ENCODE measurements at regions of chr20 and their contacts with region 1.

Region 1: GRCh38 chr20:3888622-3889488 is at the start of gene PANK2:
- DNase-seq: peak; percentile 100
- H3K4me3 ChIP-seq: peak within 1 kb of the TSS; percentile 93
- H3K4me3 Mint-ChIP-seq: peak within 1 kb of the TSS; percentile 100
- H3K27ac Mint-ChIP-seq: peak within 1 kb of the TSS; percentile 98
- H3K4me1 ChIP-seq: peaks cover 21% of the 10 kb centered on the region
- H3K4me1 Mint-ChIP-seq: peaks cover 40% of the 10 kb centered on the region
- H3K27me3 ChIP-seq: no peaks in the 10 kb centered on the region
- H3K27me3 Mint-ChIP-seq: no peaks in the 10 kb centered on the region
- CTCF ChIP-seq: peak; percentile 48 to 52
- total RNA-seq, gene PANK2: 55.8 and 58.3 TPM in 2 replicates

Region 2: DNA sequence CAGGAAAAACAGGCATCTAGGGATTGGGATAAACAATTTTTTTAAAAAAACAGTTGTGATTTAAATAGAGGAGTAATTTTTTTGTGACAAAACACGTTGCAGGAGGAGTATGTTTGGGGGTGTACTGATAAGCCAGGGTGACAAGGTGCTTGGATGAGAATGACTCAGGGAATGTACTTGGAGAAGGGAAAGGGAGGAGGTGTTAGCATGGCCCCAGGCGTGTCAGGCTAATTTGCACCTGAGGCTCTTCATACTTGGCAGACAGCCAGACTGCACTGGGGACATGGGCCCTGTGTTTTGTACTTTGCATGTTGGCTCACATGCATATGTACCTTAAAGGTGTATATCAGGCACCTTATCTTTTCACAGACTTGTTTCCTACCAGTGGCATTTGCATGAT is 23.1 kb after region 1 on chr20:
- CTCF ChIA-PET with region 1: no interaction called
- POLR2A ChIA-PET with region 1: no interaction called
- intact Hi-C with region 1: no loop called
- DNase-seq: no peak
- H3K4me3 ChIP-seq: no peak overlapping the region
- H3K4me3 Mint-ChIP-seq: no peak overlapping the region
- H3K27ac Mint-ChIP-seq: no peak overlapping the region
- H3K4me1 ChIP-seq: no peaks in the 10 kb centered on the region
- H3K4me1 Mint-ChIP-seq: no peaks in the 10 kb centered on the region
- H3K27me3 ChIP-seq: no peaks in the 10 kb centered on the region
- H3K27me3 Mint-ChIP-seq: no peaks in the 10 kb centered on the region
- CTCF ChIP-seq: no peak

Region 3: GRCh38 chr20:3970016-3970415 is 81.2 kb after region 1 on chr20:
- CTCF ChIA-PET with region 1: no interaction called
- POLR2A ChIA-PET with region 1: no interaction called
- intact Hi-C with region 1: loop called (anchors 2 kb)
- DNase-seq: peak; percentile 55 to 66
- H3K4me3 ChIP-seq: no peak overlapping the region
- H3K4me3 Mint-ChIP-seq: no peak overlapping the region
- H3K27ac Mint-ChIP-seq: no peak overlapping the region
- H3K4me1 ChIP-seq: peaks cover 14% of the 10 kb centered on the region
- H3K4me1 Mint-ChIP-seq: peaks cover 18% of the 10 kb centered on the region
- H3K27me3 ChIP-seq: no peaks in the 10 kb centered on the region
- H3K27me3 Mint-ChIP-seq: no peaks in the 10 kb centered on the region
- CTCF ChIP-seq: peak in 1 of 2 experiments; percentile 49

Region 4: GRCh38 chr20:4014031-4014474 is 125.2 kb after region 1 on chr20:
- CTCF ChIA-PET with region 1: no interaction called
- POLR2A ChIA-PET with region 1: no interaction called
- intact Hi-C with region 1: loop called (anchors 2 kb)
- DNase-seq: peak; percentile 64 to 67
- H3K4me3 ChIP-seq: peak overlapping the region; percentile 80
- H3K4me3 Mint-ChIP-seq: peak overlapping the region; percentile 65
- H3K27ac Mint-ChIP-seq: no peak overlapping the region
- H3K4me1 ChIP-seq: peaks cover 37% of the 10 kb centered on the region
- H3K4me1 Mint-ChIP-seq: peaks cover 38% of the 10 kb centered on the region
- H3K27me3 ChIP-seq: no peaks in the 10 kb centered on the region
- H3K27me3 Mint-ChIP-seq: no peaks in the 10 kb centered on the region
- CTCF ChIP-seq: peak; percentile 50 to 79

Region 5: GRCh38 chr20:4076671-4077070 is 187.8 kb after region 1 on chr20:
- CTCF ChIA-PET with region 1: interaction called, 4 read pairs
- POLR2A ChIA-PET with region 1: no interaction called
- intact Hi-C with region 1: loop called (anchors 5 kb)
- DNase-seq: no peak
- H3K4me3 ChIP-seq: no peak overlapping the region
- H3K4me3 Mint-ChIP-seq: no peak overlapping the region
- H3K27ac Mint-ChIP-seq: no peak overlapping the region
- H3K4me1 ChIP-seq: no peaks in the 10 kb centered on the region
- H3K4me1 Mint-ChIP-seq: no peaks in the 10 kb centered on the region
- H3K27me3 ChIP-seq: no peaks in the 10 kb centered on the region; the same call in 1 of the 2 replicates
- H3K27me3 Mint-ChIP-seq: peaks cover 13% of the 10 kb centered on the region
- CTCF ChIP-seq: no peak

Region 6: DNA sequence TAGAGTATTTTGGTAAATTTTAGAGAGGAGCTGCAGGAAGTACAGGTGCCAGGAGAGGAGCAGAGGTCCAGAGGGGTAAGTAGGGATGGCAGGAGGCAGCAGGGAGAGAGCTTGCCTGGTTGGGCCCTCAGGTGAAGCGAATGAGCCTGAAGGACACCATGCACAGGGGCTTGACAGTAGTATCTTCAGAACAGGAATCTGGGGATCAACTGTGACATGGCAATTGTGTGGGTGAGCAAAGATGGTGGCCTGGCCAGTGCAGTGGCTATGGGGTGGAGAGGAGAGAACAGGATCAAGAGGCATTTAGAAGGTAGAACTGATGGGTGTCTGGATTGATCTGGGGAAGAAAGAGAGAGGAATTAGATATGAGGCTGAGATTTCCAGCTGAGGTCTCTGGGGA is 195.2 kb after region 1 on chr20:
- CTCF ChIA-PET with region 1: no interaction called
- POLR2A ChIA-PET with region 1: no interaction called
- intact Hi-C with region 1: loop called (anchors 1 kb)
- DNase-seq: no peak
- H3K4me3 ChIP-seq: no peak overlapping the region
- H3K4me3 Mint-ChIP-seq: no peak overlapping the region
- H3K27ac Mint-ChIP-seq: no peak overlapping the region
- H3K4me1 ChIP-seq: peaks cover 5% of the 10 kb centered on the region
- H3K4me1 Mint-ChIP-seq: peaks cover 4% of the 10 kb centered on the region
- H3K27me3 ChIP-seq: no peaks in the 10 kb centered on the region
- H3K27me3 Mint-ChIP-seq: no peaks in the 10 kb centered on the region
- CTCF ChIP-seq: no peak

Measured in Caco-2 (cell line).